ENCODE measurements at regions of chr22 and their contacts with region 1.

Region 1: DNA sequence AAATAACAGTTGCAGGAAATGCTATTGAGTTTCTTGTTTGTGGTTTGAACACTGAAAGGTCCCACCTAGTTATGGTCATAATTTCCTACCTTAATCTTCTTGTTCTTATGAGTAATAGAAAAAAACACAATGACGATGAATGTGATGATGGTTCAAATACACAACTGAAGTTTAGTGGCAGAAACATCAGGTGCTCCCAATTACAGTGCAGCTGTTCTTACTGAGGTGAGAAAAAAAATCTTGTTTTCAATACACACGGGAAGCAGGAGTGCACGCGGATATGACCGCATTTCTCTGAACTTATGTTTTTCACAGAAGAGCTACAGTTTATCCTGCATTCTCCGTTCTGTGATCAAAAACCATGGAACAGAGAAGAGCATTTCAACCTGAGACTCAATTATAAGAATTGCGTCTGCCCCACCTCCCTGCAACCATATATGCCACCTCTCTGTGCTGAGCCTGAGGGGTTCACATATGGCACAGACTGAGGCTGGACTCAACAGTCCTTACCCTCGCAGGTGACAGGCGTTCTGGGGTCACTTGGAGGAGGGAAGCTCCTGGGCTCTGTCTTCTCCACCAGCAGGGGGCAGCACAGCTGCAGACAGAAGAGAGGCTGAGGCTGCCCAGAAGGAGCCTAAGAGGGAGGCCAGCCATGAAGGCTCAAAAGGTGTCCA is 99.7 kb upstream of the IGLL5 start:
- DNase-seq: peak in 1 of 2 experiments; percentile 15
- H3K4me3 ChIP-seq: no peak overlapping the region
- H3K27ac ChIP-seq: no peak overlapping the region
- H3K4me1 ChIP-seq: no peaks in the 10 kb centered on the region
- H3K27me3 ChIP-seq: peaks cover 27% of the 10 kb centered on the region
- CTCF ChIP-seq: peak; percentile 80

Region 2: GRCh38 chr22:23023294-23023693 is 235.4 kb after region 1 on chr22:
- CTCF ChIA-PET with region 1: interaction called, 12 read pairs
- POLR2A ChIA-PET with region 1: no interaction called
- intact Hi-C with region 1: no loop called
- DNase-seq: no peak
- H3K4me3 ChIP-seq: no peak overlapping the region
- H3K27ac ChIP-seq: no peak overlapping the region
- H3K4me1 ChIP-seq: no peaks in the 10 kb centered on the region
- H3K27me3 ChIP-seq: peaks cover 50% of the 10 kb centered on the region
- CTCF ChIP-seq: no peak

Measured in PC-9 (cell line).